Aorta (tissue), 5 donors: ENCODE measurements at regions of chr4 and their contacts with region 1.

Region 1: GRCh38 chr4:154982187-154983047 is 201.3 kb downstream of the RBM46 start:
- DNase-seq: peak; percentile 57 to 78
- ATAC-seq: peak; percentile 81
- H3K4me3 ChIP-seq: no peak overlapping the region
- H3K27ac ChIP-seq: no peak overlapping the region
- H3K4me1 ChIP-seq: no peaks in the 10 kb centered on the region
- H3K27me3 ChIP-seq: no peaks in the 10 kb centered on the region

Region 2: GRCh38 chr4:155197757-155198156 is 215.3 kb after region 1 on chr4:
- intact Hi-C with region 1: no loop called
- DNase-seq: no peak
- ATAC-seq: no peak
- H3K4me3 ChIP-seq: no peak overlapping the region
- H3K27ac ChIP-seq: no peak overlapping the region
- H3K4me1 ChIP-seq: no peaks in the 10 kb centered on the region
- H3K27me3 ChIP-seq: no peaks in the 10 kb centered on the region

Region 3: DNA sequence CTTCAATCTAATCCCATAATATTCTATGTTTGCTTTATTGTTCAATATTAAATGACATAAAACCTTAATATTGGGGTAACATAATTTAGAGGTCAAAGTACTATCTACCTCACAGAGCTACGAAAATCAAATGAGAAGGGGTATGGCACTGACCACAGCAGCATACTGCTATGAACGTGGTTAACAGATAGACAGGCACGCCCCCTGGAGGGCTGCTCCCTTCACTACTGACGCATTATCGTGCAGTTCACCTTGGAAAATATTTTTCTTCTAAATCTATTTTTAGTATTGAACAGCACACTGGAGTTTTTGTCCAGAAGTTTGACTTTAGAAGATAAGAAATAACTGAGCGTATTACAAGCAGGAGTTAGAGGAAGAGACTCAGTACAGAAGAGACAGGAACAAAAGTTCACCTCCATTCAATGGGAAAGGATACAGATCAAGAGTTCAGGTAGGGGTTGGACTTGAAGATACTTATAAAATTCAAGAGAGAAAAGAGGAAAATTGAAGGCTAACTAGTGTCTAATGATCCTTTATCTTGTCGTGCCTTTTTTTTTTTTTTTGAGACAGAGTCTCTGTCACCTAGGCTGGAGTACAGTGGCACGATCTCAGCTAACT is 371.6 kb after region 1 on chr4:
- intact Hi-C with region 1: loop called in 1 of 2 experiments (anchors 5 kb)
- DNase-seq: peak; percentile 82 to 86
- ATAC-seq: peak; percentile 91
- H3K4me3 ChIP-seq: no peak overlapping the region
- H3K27ac ChIP-seq: no peak overlapping the region
- H3K4me1 ChIP-seq: no peaks in the 10 kb centered on the region
- H3K27me3 ChIP-seq: no peaks in the 10 kb centered on the region